HEK293 (cell line): ENCODE measurements at regions of chr6 and their contacts with region 1.

Region 1: DNA sequence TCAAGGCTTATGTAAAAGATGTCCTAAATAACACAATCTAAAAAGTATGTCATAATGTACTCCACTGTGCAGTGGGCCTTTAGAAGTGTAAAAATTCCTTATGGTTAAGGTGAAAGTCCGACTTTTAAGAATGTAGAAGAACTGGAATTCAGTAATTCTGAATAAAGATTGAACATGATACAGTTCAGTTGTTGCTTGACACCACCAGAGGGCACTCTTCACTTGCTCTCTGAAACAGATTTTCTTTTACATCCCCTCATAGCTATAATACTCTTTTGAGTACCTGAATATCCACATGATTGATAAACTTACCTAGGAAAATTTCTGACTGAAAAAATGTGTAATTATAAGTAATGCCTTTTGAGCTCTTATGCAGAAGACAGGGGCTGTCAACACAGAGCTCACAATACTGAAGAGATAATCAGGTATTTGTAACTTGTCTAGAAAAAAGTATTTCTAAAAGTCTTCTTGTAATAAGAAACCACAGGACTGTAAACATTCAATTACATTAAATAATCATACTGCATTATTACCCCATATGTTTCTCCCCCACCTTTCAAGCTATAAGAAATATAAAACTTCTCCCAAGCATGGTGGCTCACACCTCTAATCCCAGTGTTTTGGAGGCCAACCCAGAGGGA is 92.1 kb downstream of the POPDC3 start:
- H3K4me3 ChIP-seq: no peak overlapping the region
- H3K27ac ChIP-seq: no peak overlapping the region
- H3K4me1 ChIP-seq: no peaks in the 10 kb centered on the region
- CTCF ChIP-seq: peak; percentile 70

Region 2: DNA sequence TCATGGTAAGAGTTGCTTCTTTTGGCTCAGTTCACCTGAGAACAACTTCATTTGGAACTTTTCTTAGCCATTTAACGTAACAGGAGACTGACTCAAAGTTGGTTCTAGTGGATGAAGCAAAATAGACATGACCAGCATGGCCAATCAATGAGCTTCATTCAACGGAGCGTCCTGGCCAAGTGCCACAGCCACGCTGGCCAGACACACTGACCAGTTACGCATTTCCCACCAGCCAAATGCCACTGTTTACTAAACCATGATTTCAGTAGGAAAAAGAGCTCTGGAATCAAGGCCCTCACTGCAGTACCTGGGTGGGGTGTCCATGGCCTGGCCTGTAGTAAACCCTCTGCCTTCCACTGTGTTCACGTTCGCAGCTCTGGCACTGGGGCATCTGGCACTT is 11.7 kb after region 1 on chr6:
- CTCF ChIA-PET with region 1: interaction called, 10 read pairs
- POLR2A ChIA-PET with region 1: interaction called, 3 read pairs
- H3K4me3 ChIP-seq: no peak overlapping the region
- H3K27ac ChIP-seq: no peak overlapping the region
- H3K4me1 ChIP-seq: no peaks in the 10 kb centered on the region
- CTCF ChIP-seq: no peak

Region 3: GRCh38 chr6:105363100-105363754 is 275.5 kb after region 1 on chr6:
- CTCF ChIA-PET with region 1: interaction called, 79 read pairs
- POLR2A ChIA-PET with region 1: no interaction called
- H3K4me3 ChIP-seq: no peak overlapping the region
- H3K27ac ChIP-seq: no peak overlapping the region
- H3K4me1 ChIP-seq: no peaks in the 10 kb centered on the region
- CTCF ChIP-seq: no peak

Region 4: DNA sequence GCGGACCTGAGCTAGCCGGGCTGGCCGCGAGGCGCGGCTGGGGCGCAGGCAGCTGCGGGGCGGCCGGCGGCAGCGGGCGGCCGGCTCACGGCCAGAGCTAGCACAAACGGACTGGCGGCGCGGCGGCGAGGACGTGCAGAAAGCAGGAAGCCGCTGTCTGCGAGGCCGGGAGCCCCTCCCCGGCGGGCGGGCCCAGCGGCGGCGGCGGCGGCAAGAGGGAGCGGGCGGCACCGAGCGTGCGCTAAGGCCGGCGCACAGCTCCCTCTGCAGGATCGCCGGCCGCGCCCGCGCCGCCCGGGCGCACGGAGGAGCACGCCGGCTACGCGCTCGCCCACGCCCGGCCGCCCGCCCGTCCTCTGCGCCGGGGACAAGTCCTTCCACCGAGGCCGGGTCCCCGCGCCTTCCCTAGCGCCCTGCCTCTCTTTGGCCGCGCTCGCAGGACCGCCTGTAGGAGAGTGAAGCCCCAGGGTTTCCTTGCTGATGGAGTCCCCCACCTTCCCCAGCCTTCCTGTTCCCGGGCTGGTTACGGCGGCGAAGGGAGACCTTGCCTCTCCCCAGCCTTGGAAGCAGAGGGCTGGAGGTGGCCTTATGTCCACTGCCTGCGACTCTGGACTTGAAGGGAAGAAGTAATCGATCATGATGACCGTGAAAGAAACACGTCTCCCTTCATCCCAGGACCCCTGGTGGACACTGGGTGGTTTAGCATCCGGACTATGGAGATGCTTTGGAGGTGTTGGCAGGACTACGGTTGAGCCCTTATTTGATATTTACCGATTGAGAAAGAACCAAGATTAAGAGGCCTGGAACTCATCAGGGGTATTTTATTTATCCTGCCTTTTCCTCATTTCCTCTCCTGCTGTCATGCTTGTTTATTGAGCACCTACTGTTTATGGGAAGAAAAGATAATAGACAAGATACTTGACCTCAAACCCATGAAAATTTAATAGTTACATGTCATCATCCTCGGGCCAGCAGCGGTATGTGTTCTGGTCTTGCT is 315.5 kb after region 1 on chr6 and contains the start of gene PREP:
- CTCF ChIA-PET with region 1: interaction called, 14 read pairs
- POLR2A ChIA-PET with region 1: no interaction called
- H3K4me3 ChIP-seq: peak within 1 kb of the TSS; percentile 73
- H3K27ac ChIP-seq: peak within 1 kb of the TSS; percentile 70; the same call in 1 of the 2 replicates
- H3K4me1 ChIP-seq: 0 out of 2 replicates have a peak, but pooled peaks cover 3% of the 10 kb centered on the region
- CTCF ChIP-seq: peak; percentile 87

Region 5: GRCh38 chr6:105424175-105424783 is 336.6 kb after region 1 on chr6:
- CTCF ChIA-PET with region 1: interaction called, 35 read pairs
- POLR2A ChIA-PET with region 1: no interaction called
- H3K4me3 ChIP-seq: no peak overlapping the region
- H3K27ac ChIP-seq: no peak overlapping the region
- H3K4me1 ChIP-seq: no peaks in the 10 kb centered on the region
- CTCF ChIP-seq: no peak

Region 6: DNA sequence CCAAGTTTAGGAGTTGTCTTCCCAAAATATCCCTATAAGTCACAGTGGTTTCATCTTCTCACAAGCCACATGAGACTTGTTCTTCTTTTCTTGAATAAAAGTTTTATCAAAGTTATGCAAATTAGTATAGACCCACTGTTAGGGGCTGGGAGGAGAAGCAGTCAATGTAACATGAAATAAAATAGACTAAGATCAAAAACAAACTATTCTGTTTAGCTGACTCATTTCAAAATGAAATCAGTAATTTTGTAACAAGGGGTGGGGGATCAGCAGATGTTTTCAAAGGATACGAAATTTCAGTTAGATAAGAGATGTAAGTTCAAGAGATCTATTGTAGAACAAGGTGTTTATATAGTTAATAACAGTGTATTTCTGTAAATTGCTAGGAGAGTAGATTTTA is 658.8 kb after region 1 on chr6:
- CTCF ChIA-PET with region 1: no interaction called
- POLR2A ChIA-PET with region 1: no interaction called
- H3K4me3 ChIP-seq: no peak overlapping the region
- H3K27ac ChIP-seq: no peak overlapping the region
- H3K4me1 ChIP-seq: no peaks in the 10 kb centered on the region
- CTCF ChIP-seq: no peak